Aorta (tissue), 5 donors: ENCODE measurements at regions of chr18 and their contacts with region 1.

Region 1: GRCh38 chr18:13289481-13290205 is 71.1 kb downstream of the LDLRAD4 start:
- DNase-seq: no peak
- ATAC-seq: peak; percentile 58
- H3K4me3 ChIP-seq: no peak overlapping the region
- H3K27ac ChIP-seq: no peak overlapping the region
- H3K4me1 ChIP-seq: peaks cover 0 to 1% of the 10 kb centered on the region in 2 donors
- H3K27me3 ChIP-seq: no peaks in the 10 kb centered on the region

Region 2: GRCh38 chr18:13375302-13376255 is 85.9 kb after region 1 on chr18:
- intact Hi-C with region 1: loop called in 1 of 2 experiments (anchors 5 kb)
- DNase-seq: peak; percentile 93
- ATAC-seq: peak; percentile 90
- H3K4me3 ChIP-seq: no peak overlapping the region
- H3K27ac ChIP-seq: peak overlapping the region; percentile 70 to 94
- H3K4me1 ChIP-seq: no peaks in the 10 kb centered on the region
- H3K27me3 ChIP-seq: no peaks in the 10 kb centered on the region